ENCODE measurements at regions of chr15 and their contacts with region 1.

Region 1: GRCh38 chr15:78241007-78241406 is 6.6 kb upstream of the ACSBG1 start:
- DNase-seq: peak; percentile 80
- H3K4me3 ChIP-seq: no peak overlapping the region
- H3K27ac ChIP-seq: no peak overlapping the region
- H3K4me1 ChIP-seq: no peaks in the 10 kb centered on the region
- H3K27me3 ChIP-seq: no peaks in the 10 kb centered on the region
- CTCF ChIP-seq: peak; percentile 87

Region 2: DNA sequence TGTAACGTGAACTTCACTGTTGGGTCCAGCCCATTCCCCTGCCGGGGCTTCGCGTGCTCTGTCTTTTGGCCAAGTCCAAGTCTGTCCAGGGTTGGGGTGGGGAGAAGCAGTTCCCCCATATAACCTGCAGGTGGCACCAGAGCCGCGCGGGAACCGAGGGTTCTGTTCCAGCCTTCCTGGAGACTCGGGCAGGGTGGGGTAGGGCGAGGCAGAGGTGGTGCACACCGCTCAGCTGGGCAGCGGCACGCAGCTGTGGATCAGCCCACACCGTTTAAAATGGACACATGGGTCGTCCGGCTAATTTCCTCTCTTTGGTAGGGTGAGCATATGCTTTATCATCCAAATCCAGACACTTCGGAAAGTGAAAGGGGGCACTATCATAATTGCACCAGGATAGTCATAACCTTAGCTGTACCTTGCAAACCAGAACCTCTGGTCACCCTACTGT is 281.6 kb before region 1 on chr15:
- CTCF ChIA-PET with region 1: no interaction called
- POLR2A ChIA-PET with region 1: no interaction called
- intact Hi-C with region 1: loop called (anchors 2 kb)
- DNase-seq: peak; percentile 80
- H3K4me3 ChIP-seq: peak overlapping the region; percentile 35
- H3K27ac ChIP-seq: no peak overlapping the region
- H3K4me1 ChIP-seq: no peaks in the 10 kb centered on the region
- H3K27me3 ChIP-seq: no peaks in the 10 kb centered on the region
- CTCF ChIP-seq: peak; percentile 94

Region 3: GRCh38 chr15:78149068-78149804 is 91.8 kb before region 1 on chr15 and contains the start of gene IDH3A:
- CTCF ChIA-PET with region 1: no interaction called
- POLR2A ChIA-PET with region 1: interaction called, 14 read pairs
- intact Hi-C with region 1: no loop called
- DNase-seq: peak; percentile 98
- H3K4me3 ChIP-seq: peak within 1 kb of the TSS; percentile 80
- H3K27ac ChIP-seq: peak within 1 kb of the TSS; percentile 45
- H3K4me1 ChIP-seq: peaks cover 12% of the 10 kb centered on the region
- H3K27me3 ChIP-seq: no peaks in the 10 kb centered on the region
- CTCF ChIP-seq: no peak
- total RNA-seq, gene IDH3A: 83.8 and 112 TPM in 2 replicates

Region 4: GRCh38 chr15:78177447-78177873 is 63.5 kb before region 1 on chr15:
- CTCF ChIA-PET with region 1: interaction called, 4 read pairs
- POLR2A ChIA-PET with region 1: no interaction called
- intact Hi-C with region 1: loop called (anchors 1 kb)
- DNase-seq: peak; percentile 63
- H3K4me3 ChIP-seq: no peak overlapping the region
- H3K27ac ChIP-seq: no peak overlapping the region
- H3K4me1 ChIP-seq: no peaks in the 10 kb centered on the region
- H3K27me3 ChIP-seq: no peaks in the 10 kb centered on the region
- CTCF ChIP-seq: peak; percentile 88

Region 5: DNA sequence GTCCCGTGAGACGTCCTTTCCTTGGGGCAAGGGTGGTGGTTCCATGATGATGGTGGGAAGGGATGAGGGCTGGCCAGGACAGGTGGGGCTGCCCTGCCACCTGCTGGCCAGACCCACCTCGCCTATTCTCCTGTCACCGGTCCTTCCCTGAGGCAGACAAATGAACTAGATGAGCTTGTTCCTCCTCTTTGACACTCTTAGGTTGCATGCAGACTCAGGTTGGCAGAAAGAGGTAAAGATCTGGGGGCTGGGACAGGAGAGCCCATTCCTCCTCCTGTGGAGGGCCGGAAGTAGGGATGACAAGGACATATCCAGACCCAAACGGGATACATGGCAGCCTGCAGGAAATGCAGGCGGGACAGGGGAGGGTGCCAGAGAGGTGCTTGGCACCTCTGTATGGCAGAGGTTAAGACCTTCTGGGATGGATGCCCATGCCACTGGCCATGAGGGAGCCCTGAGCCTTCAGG is 45.2 kb before region 1 on chr15:
- CTCF ChIA-PET with region 1: no interaction called
- POLR2A ChIA-PET with region 1: no interaction called
- intact Hi-C with region 1: loop called (anchors 5 kb)
- DNase-seq: peak; percentile 15
- H3K4me3 ChIP-seq: no peak overlapping the region
- H3K27ac ChIP-seq: no peak overlapping the region
- H3K4me1 ChIP-seq: no peaks in the 10 kb centered on the region
- H3K27me3 ChIP-seq: no peaks in the 10 kb centered on the region
- CTCF ChIP-seq: peak; percentile 61

Region 6: GRCh38 chr15:78449220-78449999 is 208.4 kb after region 1 on chr15:
- CTCF ChIA-PET with region 1: no interaction called
- POLR2A ChIA-PET with region 1: no interaction called
- intact Hi-C with region 1: no loop called
- DNase-seq: no peak
- H3K4me3 ChIP-seq: no peak overlapping the region
- H3K27ac ChIP-seq: no peak overlapping the region
- H3K4me1 ChIP-seq: peaks cover 7% of the 10 kb centered on the region
- H3K27me3 ChIP-seq: no peaks in the 10 kb centered on the region
- CTCF ChIP-seq: no peak

Region 7: DNA sequence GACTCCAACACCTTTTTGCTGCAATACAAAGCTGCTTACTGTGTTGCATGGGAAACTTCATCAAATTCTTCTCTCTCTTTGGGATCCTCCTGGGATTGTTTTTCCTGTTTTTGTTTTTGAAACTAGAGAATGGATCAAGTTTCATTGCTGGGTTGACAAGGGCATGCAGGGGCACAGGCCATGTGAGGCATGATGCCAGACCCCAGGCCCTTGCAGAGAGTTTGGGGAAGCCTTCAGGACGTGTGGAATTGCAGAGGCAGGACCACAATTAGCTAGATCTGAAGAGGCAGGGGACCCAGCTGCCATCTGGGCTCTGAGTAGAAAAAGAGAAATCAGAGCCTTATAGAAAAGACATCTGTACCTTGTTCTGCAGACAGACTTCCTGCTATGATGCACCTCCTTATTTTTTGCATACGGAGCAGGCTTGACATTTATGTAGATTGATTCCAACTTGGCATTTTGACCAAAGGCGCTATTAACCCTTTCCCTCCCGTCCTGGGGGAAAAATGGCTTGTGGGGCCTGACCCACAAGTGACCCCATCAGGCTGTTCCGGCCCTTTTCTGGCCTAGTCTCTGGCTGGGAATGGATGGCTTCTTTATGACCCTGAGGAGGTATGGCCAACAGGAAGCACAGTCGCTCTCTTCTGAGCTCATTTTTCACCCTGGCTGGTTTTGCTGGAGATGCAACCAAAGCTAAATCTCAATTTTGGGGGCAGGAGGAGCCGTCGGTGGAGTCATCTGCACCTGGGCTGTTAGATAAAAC is 444.3 kb after region 1 on chr15:
- CTCF ChIA-PET with region 1: no interaction called
- POLR2A ChIA-PET with region 1: no interaction called
- intact Hi-C with region 1: no loop called
- DNase-seq: no peak
- H3K4me3 ChIP-seq: no peak overlapping the region
- H3K27ac ChIP-seq: no peak overlapping the region
- H3K4me1 ChIP-seq: peaks cover 18% of the 10 kb centered on the region
- H3K27me3 ChIP-seq: peaks cover 87% of the 10 kb centered on the region
- CTCF ChIP-seq: no peak